ENCODE measurements at regions of chr11 and their contacts with region 1.

Region 1: GRCh38 chr11:79708300-79708932 is 267.6 kb upstream of the TENM4 start:
- DNase-seq: peak; percentile 9
- H3K4me3 Mint-ChIP-seq: no peak overlapping the region
- H3K27ac Mint-ChIP-seq: no peak overlapping the region
- H3K4me1 Mint-ChIP-seq: no peaks in the 10 kb centered on the region
- H3K27me3 Mint-ChIP-seq: no peaks in the 10 kb centered on the region
- CTCF ChIP-seq: no peak

Region 2: GRCh38 chr11:81005595-81005994 is 1297.2 kb after region 1 on chr11:
- CTCF ChIA-PET with region 1: no interaction called
- intact Hi-C with region 1: loop called (anchors 10 kb)
- DNase-seq: no peak
- H3K4me3 Mint-ChIP-seq: no peak overlapping the region
- H3K27ac Mint-ChIP-seq: no peak overlapping the region
- H3K4me1 Mint-ChIP-seq: no peaks in the 10 kb centered on the region
- H3K27me3 Mint-ChIP-seq: no peaks in the 10 kb centered on the region
- CTCF ChIP-seq: no peak

Region 3: GRCh38 chr11:81237139-81237538 is 1528.7 kb after region 1 on chr11:
- CTCF ChIA-PET with region 1: no interaction called
- intact Hi-C with region 1: loop called (anchors 5 kb)
- DNase-seq: no peak
- H3K4me3 Mint-ChIP-seq: no peak overlapping the region
- H3K27ac Mint-ChIP-seq: no peak overlapping the region
- H3K4me1 Mint-ChIP-seq: no peaks in the 10 kb centered on the region
- H3K27me3 Mint-ChIP-seq: no peaks in the 10 kb centered on the region
- CTCF ChIP-seq: no peak

Measured in Calu3 (cell line).